Right lobe of liver (tissue), 6 donors: ENCODE measurements at regions of chr11 and their contacts with region 1.

Region 1: DNA sequence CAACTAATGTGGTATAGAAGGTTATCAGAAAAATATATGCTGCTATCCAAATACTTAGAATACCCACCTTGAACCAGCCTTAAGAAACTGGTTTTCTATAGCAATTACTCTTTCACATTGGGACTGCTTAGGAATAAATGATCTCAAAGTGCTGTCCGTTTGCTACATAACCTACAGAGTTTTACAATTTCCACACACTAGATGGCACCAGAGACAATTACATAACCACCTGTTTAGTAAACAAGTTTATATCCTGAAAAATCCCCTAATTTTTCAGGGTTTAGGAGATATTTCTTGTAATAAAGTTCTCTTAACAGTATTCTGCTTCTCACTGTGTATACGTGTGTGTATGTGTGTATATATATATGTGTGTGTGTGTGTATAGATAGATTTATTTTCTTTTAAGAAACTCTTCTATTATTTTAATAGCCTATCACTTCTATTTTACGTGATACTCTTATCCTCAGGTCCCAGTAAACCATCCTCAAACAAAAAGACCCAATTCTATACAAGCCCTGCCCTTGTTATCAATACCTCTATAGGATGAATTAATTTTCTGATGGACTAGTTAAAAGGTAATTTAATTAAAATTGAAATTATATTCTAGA is 6.7 kb upstream of the OR5I1 start:
- DNase-seq: no peak
- ATAC-seq: peak; percentile 59 to 80 (median 70)
- H3K4me3 ChIP-seq: no peak overlapping the region
- H3K27ac ChIP-seq: no peak overlapping the region
- H3K4me1 ChIP-seq: no peaks in the 10 kb centered on the region
- H3K27me3 ChIP-seq: no peaks in the 10 kb centered on the region
- CTCF ChIP-seq: peak; percentile 27 to 55 (median 46)
- POLR2A ChIP-seq: no peak

Region 2: DNA sequence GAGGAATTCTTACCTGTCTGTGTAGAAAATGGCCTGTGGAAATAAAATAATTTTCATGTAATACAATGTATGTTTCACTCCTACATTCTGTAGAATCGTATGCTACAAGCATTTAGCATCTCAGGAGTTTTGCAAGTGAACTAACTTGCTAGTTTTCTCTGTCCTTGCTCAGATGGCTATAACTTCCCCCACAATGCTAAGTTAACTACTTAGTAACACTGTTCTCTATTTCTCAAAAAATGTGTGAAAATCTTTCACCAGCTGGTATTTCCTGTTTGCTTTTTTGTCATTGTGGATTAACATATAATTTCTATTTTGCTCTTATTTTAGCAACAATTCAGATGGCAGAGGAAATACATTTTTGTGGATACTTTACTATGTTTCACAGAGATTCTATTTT is 290.3 kb before region 1 on chr11:
- intact Hi-C with region 1: no loop called
- DNase-seq: no peak
- ATAC-seq: no peak
- H3K4me3 ChIP-seq: no peak overlapping the region
- H3K27ac ChIP-seq: no peak overlapping the region
- H3K4me1 ChIP-seq: no peaks in the 10 kb centered on the region
- H3K27me3 ChIP-seq: no peaks in the 10 kb centered on the region
- CTCF ChIP-seq: no peak
- POLR2A ChIP-seq: no peak

Region 3: GRCh38 chr11:56045538-56045937 is 102.6 kb after region 1 on chr11:
- intact Hi-C with region 1: no loop called
- DNase-seq: no peak
- ATAC-seq: no peak
- H3K4me3 ChIP-seq: no peak overlapping the region
- H3K27ac ChIP-seq: no peak overlapping the region
- H3K4me1 ChIP-seq: no peaks in the 10 kb centered on the region
- H3K27me3 ChIP-seq: no peaks in the 10 kb centered on the region
- CTCF ChIP-seq: no peak
- POLR2A ChIP-seq: no peak

Region 4: GRCh38 chr11:56183459-56183858 is 240.6 kb after region 1 on chr11:
- intact Hi-C with region 1: no loop called
- DNase-seq: no peak
- ATAC-seq: no peak
- H3K4me3 ChIP-seq: no peak overlapping the region
- H3K27ac ChIP-seq: no peak overlapping the region
- H3K4me1 ChIP-seq: no peaks in the 10 kb centered on the region
- H3K27me3 ChIP-seq: no peaks in the 10 kb centered on the region
- CTCF ChIP-seq: no peak
- POLR2A ChIP-seq: no peak

Region 5: DNA sequence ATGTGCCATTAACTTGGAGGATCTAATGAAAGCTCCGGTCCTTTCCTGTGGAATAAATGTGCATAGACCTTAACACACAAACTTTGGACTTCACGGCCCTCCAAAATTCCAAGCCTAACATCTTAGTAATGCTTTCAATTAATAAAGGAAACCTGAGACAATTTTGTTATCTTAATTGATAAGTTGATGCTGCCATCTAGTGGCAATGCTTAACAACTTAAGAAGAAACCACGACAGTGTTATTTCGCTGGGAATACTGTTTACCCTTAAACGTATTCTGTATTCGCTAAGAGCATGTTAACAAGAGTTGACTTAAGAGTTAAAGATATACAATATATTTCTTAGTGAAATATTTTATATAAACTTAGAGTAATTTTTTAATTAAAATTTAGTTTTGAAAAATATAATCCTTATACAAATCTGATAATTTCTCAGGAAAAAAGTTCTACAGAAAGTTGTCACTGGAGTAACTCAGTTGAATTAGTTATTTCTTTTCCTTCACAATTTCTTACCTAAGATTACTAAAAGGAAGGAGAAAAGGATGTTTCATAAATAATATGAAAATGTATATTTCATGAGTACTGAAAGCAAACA is 840.7 kb after region 1 on chr11:
- intact Hi-C with region 1: loop called in 1 of 2 experiments (anchors 10 kb)
- DNase-seq: no peak
- ATAC-seq: peak; percentile 62 to 78 (median 68)
- H3K4me3 ChIP-seq: no peak overlapping the region
- H3K27ac ChIP-seq: no peak overlapping the region
- H3K4me1 ChIP-seq: no peaks in the 10 kb centered on the region
- H3K27me3 ChIP-seq: no peaks in the 10 kb centered on the region
- CTCF ChIP-seq: peak; percentile 53 to 65 (median 60)
- POLR2A ChIP-seq: no peak